ENCODE measurements at regions of chr10 and their contacts with region 1.

Region 1: DNA sequence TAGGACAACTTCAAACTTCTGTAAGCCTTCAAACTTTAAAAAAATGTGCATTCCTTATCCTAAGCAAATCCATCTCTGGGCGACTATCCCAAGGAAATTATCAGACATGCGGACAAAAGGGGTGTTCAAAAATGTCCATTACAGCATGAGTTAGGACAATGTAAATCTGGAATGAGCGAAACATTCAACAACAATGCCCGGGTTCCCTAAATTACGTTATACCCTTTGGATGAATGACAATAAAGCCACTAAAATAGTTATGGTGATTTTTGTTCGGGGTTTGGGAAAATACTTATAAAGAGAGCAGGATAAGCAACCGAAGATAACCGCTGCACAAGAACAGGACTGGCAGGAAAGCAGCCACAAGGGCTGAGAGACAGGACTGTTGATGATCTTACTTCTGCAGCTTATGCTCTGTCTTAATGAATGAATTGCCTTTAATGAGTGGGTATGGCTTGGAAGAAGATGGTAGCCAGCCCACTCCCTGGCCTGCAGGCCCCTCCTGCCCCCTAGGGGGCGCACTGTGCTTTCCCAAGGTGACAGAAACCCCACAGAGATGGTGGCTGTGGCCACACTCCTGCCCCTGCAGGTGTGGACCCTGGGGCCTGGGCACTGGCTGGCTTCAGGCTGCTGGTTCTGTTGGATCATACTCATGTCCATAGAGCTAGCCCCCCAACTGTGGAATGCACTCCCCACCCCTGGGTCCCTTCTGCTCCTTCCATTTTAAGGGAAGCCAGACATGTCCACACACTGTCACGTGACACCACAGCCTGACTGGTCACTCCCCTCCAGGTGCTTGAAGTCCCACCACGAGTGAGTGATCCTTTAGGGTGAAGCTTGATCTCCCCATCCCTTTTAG is 45.0 kb downstream of the ZCCHC24 start:
- DNase-seq: peak in 1 of 2 experiments; percentile 89
- H3K4me3 ChIP-seq: no peak overlapping the region
- H3K27ac ChIP-seq: no peak overlapping the region
- H3K4me1 ChIP-seq: peaks cover 8 to 30% (median 15%) of the 10 kb centered on the region in 4 experiments
- H3K27me3 ChIP-seq: no peaks in the 10 kb centered on the region; a peak in 1 of 7 replicates
- CTCF ChIP-seq: peak; percentile 80 to 95 (median 86)
- EP300 ChIP-seq: no peak
- POLR2A ChIP-seq: no peak
- RAD21 ChIP-seq: peak; percentile 69 to 78

Region 2: GRCh38 chr10:79411546-79412495 is 11.4 kb after region 1 on chr10:
- CTCF ChIA-PET with region 1: interaction called, 12 read pairs
- POLR2A ChIA-PET with region 1: no interaction called
- DNase-seq: no peak
- H3K4me3 ChIP-seq: no peak overlapping the region
- H3K27ac ChIP-seq: no peak overlapping the region
- H3K4me1 ChIP-seq: peaks cover 0 to 2% (median 0%) of the 10 kb centered on the region in 4 experiments; a peak in 1 of 7 replicates
- H3K27me3 ChIP-seq: no peaks in the 10 kb centered on the region
- CTCF ChIP-seq: no peak
- EP300 ChIP-seq: no peak
- POLR2A ChIP-seq: no peak
- RAD21 ChIP-seq: no peak

Region 3: GRCh38 chr10:79438021-79438698 is 37.8 kb after region 1 on chr10:
- CTCF ChIA-PET with region 1: interaction called, 13 read pairs
- POLR2A ChIA-PET with region 1: no interaction called
- DNase-seq: no peak
- H3K4me3 ChIP-seq: no peak overlapping the region
- H3K27ac ChIP-seq: no peak overlapping the region
- H3K4me1 ChIP-seq: peaks cover 0 to 11% (median 2%) of the 10 kb centered on the region in 4 experiments; a peak in 4 of 7 replicates
- H3K27me3 ChIP-seq: peaks cover 0 to 4% (median 1%) of the 10 kb centered on the region in 4 experiments; a peak in 3 of 7 replicates
- CTCF ChIP-seq: peak; percentile 22 to 54 (median 52); a peak in 3 of 4 replicates
- EP300 ChIP-seq: no peak
- POLR2A ChIP-seq: no peak
- RAD21 ChIP-seq: peak; percentile 39 to 60

Region 4: DNA sequence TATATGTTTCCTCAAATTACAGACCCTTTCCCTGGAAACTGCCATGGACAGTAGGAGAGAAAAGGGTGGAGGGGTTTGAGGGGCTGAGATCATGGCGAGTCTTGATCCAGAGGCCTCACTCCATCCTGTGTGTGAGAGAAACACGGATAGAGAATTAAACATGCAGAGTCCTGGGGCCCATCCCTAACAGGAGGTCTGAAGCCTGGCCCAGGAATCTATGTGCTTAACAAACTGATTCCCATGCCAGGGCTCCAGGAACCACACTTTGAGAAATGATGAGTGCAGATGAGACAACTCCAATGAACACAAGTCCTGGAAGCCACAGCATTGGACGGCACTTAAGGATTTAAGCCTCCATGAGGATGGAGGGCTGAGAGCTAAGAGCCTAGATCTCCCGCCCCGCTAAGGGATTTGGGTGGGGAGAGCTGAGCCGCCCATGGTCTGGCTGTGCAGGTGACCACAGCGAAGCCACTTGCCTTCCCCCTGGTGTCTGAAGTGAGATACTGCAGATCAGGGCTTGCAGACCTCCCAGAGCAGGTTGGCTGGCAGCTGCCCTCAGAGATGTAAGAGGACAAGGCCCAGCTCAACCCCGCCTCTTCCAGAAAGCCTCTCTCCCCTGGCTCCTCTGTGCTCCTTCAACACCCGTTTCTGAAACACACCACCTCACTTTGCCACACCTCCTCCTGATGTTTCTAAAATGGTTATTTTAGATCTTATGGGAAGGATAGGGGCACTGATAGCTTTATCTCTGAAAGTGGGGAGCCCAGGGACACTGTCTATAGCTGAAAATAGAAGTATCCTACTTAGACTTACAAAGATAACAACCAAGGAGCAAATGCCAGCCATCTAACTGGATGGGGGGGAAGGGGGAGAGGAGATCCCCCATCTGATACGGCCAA is 87.2 kb after region 1 on chr10:
- CTCF ChIA-PET with region 1: interaction called, 100 read pairs
- POLR2A ChIA-PET with region 1: interaction called, 3 read pairs
- DNase-seq: peak; percentile 80 to 83
- H3K4me3 ChIP-seq: no peak overlapping the region
- H3K27ac ChIP-seq: no peak overlapping the region
- H3K4me1 ChIP-seq: peaks cover 0 to 3% (median 0%) of the 10 kb centered on the region in 4 experiments; a peak in 1 of 7 replicates
- H3K27me3 ChIP-seq: peaks cover 0 to 4% (median 0%) of the 10 kb centered on the region in 4 experiments; a peak in 2 of 7 replicates
- CTCF ChIP-seq: peak; percentile 86 to 94 (median 90)
- EP300 ChIP-seq: no peak
- POLR2A ChIP-seq: no peak
- RAD21 ChIP-seq: peak; percentile 83 to 86

Measured in H1 (cell line).